MCF 10A (cell line): ENCODE measurements at regions of chr19 and their contacts with region 1.

Region 1: GRCh38 chr19:45496349-45496953 is 396 bp downstream of the RTN2 start:
- DNase-seq: no peak
- H3K4me3 Mint-ChIP-seq: peak overlapping the region; percentile 75
- H3K27ac Mint-ChIP-seq: peak overlapping the region; percentile 24
- H3K4me1 Mint-ChIP-seq: peaks cover 13% of the 10 kb centered on the region
- H3K27me3 Mint-ChIP-seq: no peaks in the 10 kb centered on the region
- CTCF ChIP-seq: no peak

Region 2: DNA sequence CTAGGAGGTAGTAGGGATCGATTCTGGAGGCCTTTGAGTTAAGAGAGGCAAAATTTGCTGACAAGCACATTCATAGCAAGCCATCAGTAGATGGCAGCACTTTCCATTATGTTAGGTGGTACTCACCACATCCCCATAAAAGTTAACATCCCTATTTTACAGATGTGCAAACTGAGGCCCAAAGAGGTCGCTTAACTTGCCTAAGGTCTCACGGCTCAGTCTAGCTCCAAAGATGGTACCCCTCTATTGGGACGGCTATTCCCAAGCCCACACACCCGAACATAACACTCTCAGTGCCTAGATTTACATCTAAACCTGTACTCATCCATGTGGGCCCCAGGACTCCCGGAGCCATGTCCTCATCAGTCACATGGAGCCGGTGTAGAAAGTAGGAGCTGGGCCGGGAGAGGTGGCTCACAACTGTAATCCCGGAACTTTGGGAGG is 50.1 kb before region 1 on chr19:
- CTCF ChIA-PET with region 1: no interaction called
- POLR2A ChIA-PET with region 1: no interaction called
- intact Hi-C with region 1: no loop called
- DNase-seq: peak; percentile 60
- H3K4me3 Mint-ChIP-seq: no peak overlapping the region
- H3K27ac Mint-ChIP-seq: peak overlapping the region; percentile 100
- H3K4me1 Mint-ChIP-seq: peaks cover 52% of the 10 kb centered on the region
- H3K27me3 Mint-ChIP-seq: no peaks in the 10 kb centered on the region
- CTCF ChIP-seq: peak; percentile 31

Region 3: GRCh38 chr19:45485305-45486077 is 11.0 kb before region 1 on chr19:
- CTCF ChIA-PET with region 1: interaction called, 31 read pairs
- POLR2A ChIA-PET with region 1: interaction called, 12 read pairs
- intact Hi-C with region 1: no loop called
- DNase-seq: peak; percentile 98
- H3K4me3 Mint-ChIP-seq: peak overlapping the region; percentile 87
- H3K27ac Mint-ChIP-seq: peak overlapping the region; percentile 42
- H3K4me1 Mint-ChIP-seq: peaks cover 5% of the 10 kb centered on the region
- H3K27me3 Mint-ChIP-seq: no peaks in the 10 kb centered on the region
- CTCF ChIP-seq: peak; percentile 76

Region 4: GRCh38 chr19:45558399-45558878 is 62.0 kb after region 1 on chr19:
- CTCF ChIA-PET with region 1: interaction called, 5 read pairs
- POLR2A ChIA-PET with region 1: interaction called, 3 read pairs
- intact Hi-C with region 1: loop called (anchors 1 kb)
- DNase-seq: peak; percentile 85
- H3K4me3 Mint-ChIP-seq: no peak overlapping the region
- H3K27ac Mint-ChIP-seq: no peak overlapping the region
- H3K4me1 Mint-ChIP-seq: no peaks in the 10 kb centered on the region
- H3K27me3 Mint-ChIP-seq: no peaks in the 10 kb centered on the region
- CTCF ChIP-seq: peak; percentile 64